ENCODE measurements at regions of chr10 and their contacts with region 1.

Region 1: DNA sequence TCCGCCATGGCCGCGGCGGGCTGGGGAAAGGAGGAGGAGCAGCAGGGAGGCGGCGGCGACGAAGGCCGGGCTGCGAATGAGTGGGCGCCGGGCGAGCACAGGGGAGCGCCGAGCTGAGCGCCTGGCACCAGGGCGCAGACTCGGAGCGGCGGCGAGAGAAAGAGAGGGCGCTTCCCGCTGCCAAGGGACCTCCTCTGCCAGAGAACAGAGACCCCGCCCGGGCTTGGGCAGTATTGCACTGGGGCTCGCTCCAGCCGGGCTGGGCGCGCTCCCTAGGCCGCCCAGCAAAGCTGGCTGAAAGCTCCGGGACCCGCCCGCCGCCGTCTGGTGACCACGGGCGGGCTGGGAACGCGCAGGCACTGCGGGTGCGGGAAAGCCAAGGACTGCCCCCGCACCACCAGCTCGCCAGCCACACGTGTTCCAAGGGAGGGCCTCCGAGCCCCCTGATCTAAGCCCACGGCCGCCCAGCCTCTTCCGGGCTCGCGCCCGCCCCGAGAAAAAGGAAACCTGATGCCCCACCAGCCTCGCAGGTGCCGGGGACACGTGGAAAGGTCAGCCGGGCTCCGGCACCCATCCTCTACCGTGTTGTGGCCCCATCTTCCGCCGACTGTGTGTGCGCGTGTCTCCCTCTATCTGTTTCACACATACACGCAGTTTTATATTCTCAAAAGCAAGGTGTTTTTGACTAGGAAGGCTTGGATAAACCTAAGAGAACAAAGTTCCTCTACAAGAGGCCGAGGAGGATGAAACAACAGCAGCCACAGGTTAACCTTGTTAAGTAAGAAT is at the start of gene CCDC6:
- DNase-seq: peak; percentile 86
- H3K4me3 Mint-ChIP-seq: peak within 1 kb of the TSS; percentile 94
- H3K27ac Mint-ChIP-seq: peak within 1 kb of the TSS; percentile 94
- H3K4me1 Mint-ChIP-seq: peaks cover 51% of the 10 kb centered on the region
- H3K27me3 Mint-ChIP-seq: no peaks in the 10 kb centered on the region
- total RNA-seq, gene CCDC6: 61.5 and 63.1 TPM in 2 replicates

Region 2: DNA sequence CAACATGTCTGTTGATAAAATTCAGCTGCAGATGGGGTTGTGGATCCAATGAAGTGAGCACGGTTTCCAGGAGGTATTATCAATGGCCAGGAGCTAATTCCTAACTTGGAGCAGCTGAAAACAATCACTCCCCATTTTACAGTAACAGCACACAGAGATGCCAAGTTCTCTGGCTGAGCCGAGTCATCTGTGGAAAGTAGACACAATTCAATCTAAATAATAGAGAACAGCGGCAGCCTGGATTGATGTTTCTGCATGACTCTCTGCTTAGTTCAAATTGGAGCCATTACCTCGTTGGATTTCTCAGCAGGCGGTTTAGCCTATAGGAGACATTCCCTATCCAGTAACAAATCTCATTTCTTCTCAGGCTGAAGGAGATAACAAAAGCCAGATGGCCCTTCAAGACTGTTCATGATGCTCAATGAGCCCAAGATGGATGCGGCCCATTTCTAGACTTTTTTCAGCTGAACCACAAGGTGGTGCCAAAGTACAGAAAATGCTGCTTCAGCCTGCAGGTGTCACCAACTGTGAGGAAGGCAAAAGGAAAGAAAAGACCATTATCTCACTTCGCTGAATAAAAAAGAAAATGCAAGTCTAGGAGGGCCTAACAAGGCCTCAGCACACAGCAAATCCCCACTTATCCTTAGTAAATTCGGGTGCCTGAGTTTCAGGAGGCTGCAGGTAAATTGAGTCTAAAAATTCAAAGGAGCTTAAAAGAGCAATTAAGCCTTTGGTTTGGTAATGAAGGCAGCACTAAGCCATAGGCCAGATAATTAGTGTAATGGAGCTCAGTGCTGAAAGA is 280.7 kb before region 1 on chr10:
- intact Hi-C with region 1: loop called (anchors 5 kb)
- DNase-seq: peak; percentile 31
- H3K4me3 Mint-ChIP-seq: no peak overlapping the region
- H3K27ac Mint-ChIP-seq: no peak overlapping the region
- H3K4me1 Mint-ChIP-seq: peaks cover 3% of the 10 kb centered on the region
- H3K27me3 Mint-ChIP-seq: peaks cover 16% of the 10 kb centered on the region

Region 3: DNA sequence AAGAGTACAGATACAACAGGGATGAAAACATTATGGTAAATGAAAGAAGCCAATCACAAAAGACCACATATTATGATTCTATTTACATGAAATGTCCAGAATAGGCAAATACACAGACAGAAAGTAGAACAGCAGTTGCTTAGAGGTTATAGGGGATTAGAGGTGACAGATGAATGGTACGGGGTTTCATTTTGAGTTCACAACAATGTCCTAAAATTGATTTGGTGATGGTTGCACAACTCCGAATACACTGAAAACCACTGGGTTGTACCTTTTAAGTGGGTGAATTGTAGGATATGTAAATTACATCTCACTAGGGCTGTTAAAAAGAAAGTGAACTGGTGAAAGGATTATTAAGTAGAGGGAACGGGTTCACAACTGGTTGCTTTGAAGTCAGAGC is 77.0 kb before region 1 on chr10:
- intact Hi-C with region 1: loop called (anchors 1 kb)
- DNase-seq: no peak
- H3K4me3 Mint-ChIP-seq: no peak overlapping the region
- H3K27ac Mint-ChIP-seq: peak overlapping the region; percentile 69
- H3K4me1 Mint-ChIP-seq: peaks cover 47% of the 10 kb centered on the region
- H3K27me3 Mint-ChIP-seq: no peaks in the 10 kb centered on the region

Region 4: DNA sequence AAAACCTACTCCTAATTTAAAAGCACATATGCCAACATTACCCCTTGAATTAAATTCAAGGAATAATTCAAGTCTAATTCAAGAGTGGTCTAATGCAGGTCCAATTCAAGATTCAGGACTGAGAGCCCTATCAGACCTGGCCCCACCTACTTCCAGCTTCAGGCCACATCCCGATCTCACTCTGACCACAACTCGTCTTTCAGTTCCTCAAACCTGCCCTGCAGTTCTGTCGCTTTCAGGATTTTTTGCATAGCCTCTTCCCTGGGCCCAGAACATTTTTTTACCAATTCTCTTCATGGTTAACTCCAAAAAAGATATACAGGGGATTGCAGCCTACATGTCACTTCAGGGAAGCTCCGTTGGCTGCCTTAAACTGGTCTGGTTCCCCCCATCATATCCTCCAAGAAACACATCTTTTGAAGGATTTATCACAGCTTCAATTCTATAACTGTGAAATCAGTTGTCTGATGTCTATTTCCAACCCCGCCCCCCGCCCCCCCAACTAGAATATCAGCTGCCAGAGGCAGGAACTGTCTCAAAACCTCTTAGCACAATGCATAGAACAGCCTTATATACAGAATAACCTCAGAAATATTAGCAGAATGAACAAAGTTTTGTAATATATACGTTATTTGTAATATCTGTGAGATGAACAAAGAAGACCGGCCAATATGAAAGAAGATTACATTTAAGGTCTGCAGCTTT is 21.0 kb before region 1 on chr10:
- intact Hi-C with region 1: loop called (anchors 1 kb)
- DNase-seq: no peak
- H3K4me3 Mint-ChIP-seq: peak overlapping the region; percentile 40
- H3K27ac Mint-ChIP-seq: peak overlapping the region; percentile 83
- H3K4me1 Mint-ChIP-seq: peaks cover 75% of the 10 kb centered on the region
- H3K27me3 Mint-ChIP-seq: no peaks in the 10 kb centered on the region

Region 5: GRCh38 chr10:60138026-60138425 is 231.4 kb after region 1 on chr10:
- intact Hi-C with region 1: no loop called
- DNase-seq: no peak
- H3K4me3 Mint-ChIP-seq: no peak overlapping the region
- H3K27ac Mint-ChIP-seq: no peak overlapping the region
- H3K4me1 Mint-ChIP-seq: peaks cover 4% of the 10 kb centered on the region
- H3K27me3 Mint-ChIP-seq: no peaks in the 10 kb centered on the region

Region 6: GRCh38 chr10:60148264-60148840 is 241.7 kb after region 1 on chr10:
- intact Hi-C with region 1: no loop called
- DNase-seq: no peak
- H3K4me3 Mint-ChIP-seq: no peak overlapping the region
- H3K27ac Mint-ChIP-seq: no peak overlapping the region
- H3K4me1 Mint-ChIP-seq: no peaks in the 10 kb centered on the region
- H3K27me3 Mint-ChIP-seq: no peaks in the 10 kb centered on the region

Region 7: DNA sequence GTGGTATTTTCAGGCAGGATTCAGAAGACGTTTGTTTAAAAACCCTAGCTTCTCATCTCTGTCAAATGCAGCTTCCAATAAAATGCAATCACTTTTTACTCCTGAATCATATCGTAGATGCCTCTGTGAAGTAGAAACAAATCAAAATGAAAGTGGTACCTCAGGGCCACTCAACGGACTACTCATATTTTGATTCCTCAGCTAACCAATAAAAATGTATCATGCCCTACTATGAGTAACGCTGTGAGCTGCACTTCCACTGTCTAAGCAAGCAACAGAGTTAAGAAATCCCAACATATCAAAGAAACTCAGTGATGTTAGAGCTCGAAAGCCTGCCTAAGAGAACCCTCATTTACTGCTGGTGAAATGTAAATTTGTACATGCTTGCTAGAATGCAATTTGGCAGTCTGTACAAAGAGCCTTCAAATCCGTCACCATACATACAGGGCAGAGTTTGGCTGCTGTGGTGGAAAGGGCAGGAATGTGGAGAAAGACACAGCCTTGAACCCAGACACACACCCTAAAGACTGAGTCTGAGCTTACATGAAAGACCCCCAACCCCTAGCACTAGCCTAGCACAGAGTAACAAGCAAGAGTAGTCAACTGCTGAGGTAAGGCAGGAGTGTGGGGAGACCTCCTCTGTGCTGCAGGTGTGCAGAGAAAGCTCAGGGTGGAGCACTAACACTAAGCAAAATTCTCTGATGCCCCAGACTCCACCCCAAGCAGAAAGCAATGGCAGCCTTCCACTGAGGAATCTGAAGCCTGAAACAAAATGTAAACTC is 331.6 kb after region 1 on chr10:
- intact Hi-C with region 1: loop called (anchors 1 kb)
- DNase-seq: peak; percentile 24
- H3K4me3 Mint-ChIP-seq: peak overlapping the region; percentile 69
- H3K27ac Mint-ChIP-seq: peak overlapping the region; percentile 66
- H3K4me1 Mint-ChIP-seq: peaks cover 28% of the 10 kb centered on the region
- H3K27me3 Mint-ChIP-seq: no peaks in the 10 kb centered on the region

Region 8: GRCh38 chr10:60572511-60573194 is 666.0 kb after region 1 on chr10:
- intact Hi-C with region 1: loop called (anchors 2 kb)
- DNase-seq: peak; percentile 14
- H3K4me3 Mint-ChIP-seq: peak overlapping the region; percentile 91
- H3K27ac Mint-ChIP-seq: peak overlapping the region; percentile 85
- H3K4me1 Mint-ChIP-seq: peaks cover 43% of the 10 kb centered on the region
- H3K27me3 Mint-ChIP-seq: no peaks in the 10 kb centered on the region

Measured in activated T-helper 2 cell treated with anti-CD3 and anti-CD28 coated beads, Interferon-gamma antibody, Interleukin-2, Interleukin-4, amounts not matched to agents 10 μg/mL and 5 μg/mL and 100 μg/mL, durations not matched to agents 14 hours and 24 hours and 36 hours (primary cell).